B cell (primary cell): ENCODE measurements at regions of chr18 and their contacts with region 1.

Region 1: GRCh38 chr18:63422087-63422809 is at the start of gene VPS4B:
- DNase-seq: peak; percentile 100
- ATAC-seq: peak; percentile 96
- H3K4me3 ChIP-seq: peak within 1 kb of the TSS; percentile 73 to 99 (median 82)
- H3K4me3 Mint-ChIP-seq: peak within 1 kb of the TSS; percentile 99
- H3K27ac ChIP-seq: peak within 1 kb of the TSS; percentile 93 to 99
- H3K27ac Mint-ChIP-seq: peak within 1 kb of the TSS; percentile 96
- H3K4me1 ChIP-seq: peaks cover 18 to 21% of the 10 kb centered on the region in 2 donors
- H3K4me1 Mint-ChIP-seq: peaks cover 35% of the 10 kb centered on the region
- H3K27me3 ChIP-seq: no peaks in the 10 kb centered on the region
- H3K27me3 Mint-ChIP-seq: peaks cover 9% of the 10 kb centered on the region
- CTCF ChIP-seq: peak; percentile 0
- total RNA-seq, gene VPS4B: 91.5 and 93.9 TPM in 2 replicates

Region 2: DNA sequence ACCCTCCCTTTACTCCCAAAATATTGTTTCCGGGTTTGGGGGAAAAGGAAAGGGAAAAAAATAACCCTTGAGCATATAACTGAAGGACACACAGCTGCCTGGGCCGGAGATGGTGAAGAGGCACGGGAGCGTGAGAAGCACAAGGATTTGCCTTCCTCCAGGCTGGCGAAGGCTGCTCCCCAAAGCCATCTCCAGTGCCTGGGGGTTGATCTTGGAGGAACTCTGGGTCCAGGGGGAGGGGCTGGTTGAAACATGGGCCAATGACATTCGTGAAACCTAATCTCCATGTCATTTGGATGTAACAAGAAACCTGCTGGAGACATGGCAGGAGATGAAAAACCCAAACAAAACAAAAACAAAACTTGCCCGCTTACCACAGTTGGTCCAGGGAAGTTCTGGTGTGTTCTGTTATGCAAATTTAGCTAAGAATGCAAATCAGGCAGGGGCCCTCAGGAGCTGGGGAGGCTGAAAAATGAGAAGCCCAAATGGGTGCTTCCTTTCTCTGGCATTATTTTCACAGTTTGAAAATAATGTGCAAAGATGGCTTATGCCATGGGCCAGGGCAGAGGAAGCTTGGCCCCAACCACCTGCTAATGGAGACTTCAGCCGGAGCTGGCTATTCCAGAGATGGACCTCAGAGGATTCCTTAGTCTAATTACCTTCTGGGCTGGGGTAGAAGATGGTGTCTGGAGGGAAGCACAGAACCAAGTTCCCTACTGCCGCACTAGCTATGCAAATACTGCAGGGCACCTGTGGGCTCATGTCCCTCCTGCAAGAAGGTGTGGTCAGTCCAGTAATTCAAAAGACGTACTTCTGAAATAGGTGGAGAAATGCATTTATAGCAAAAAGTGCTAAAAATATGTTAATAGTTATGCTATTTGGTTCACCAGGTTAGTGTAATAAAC is 283.6 kb before region 1 on chr18:
- CTCF ChIA-PET with region 1: no interaction called
- POLR2A ChIA-PET with region 1: no interaction called
- intact Hi-C with region 1: loop called (anchors 1 kb)
- DNase-seq: peak; percentile 80
- ATAC-seq: peak; percentile 57
- H3K4me3 ChIP-seq: peak overlapping the region; percentile 27 to 67 (median 56)
- H3K4me3 Mint-ChIP-seq: peak overlapping the region; percentile 95
- H3K27ac ChIP-seq: peak overlapping the region; percentile 73 to 84
- H3K27ac Mint-ChIP-seq: peak overlapping the region; percentile 98
- H3K4me1 ChIP-seq: peaks cover 63 to 67% of the 10 kb centered on the region in 2 donors
- H3K4me1 Mint-ChIP-seq: peaks cover 84% of the 10 kb centered on the region
- H3K27me3 ChIP-seq: no peaks in the 10 kb centered on the region
- H3K27me3 Mint-ChIP-seq: no peaks in the 10 kb centered on the region
- CTCF ChIP-seq: no peak

Region 3: GRCh38 chr18:63367053-63367953 is 54.9 kb before region 1 on chr18 and contains the start of gene KDSR:
- CTCF ChIA-PET with region 1: interaction called, 3 read pairs
- POLR2A ChIA-PET with region 1: interaction called, 4 read pairs
- intact Hi-C with region 1: loop called (anchors 1 kb)
- DNase-seq: peak; percentile 89
- ATAC-seq: peak; percentile 93
- H3K4me3 ChIP-seq: peak within 1 kb of the TSS; percentile 83 to 94 (median 85)
- H3K4me3 Mint-ChIP-seq: peak within 1 kb of the TSS; percentile 90
- H3K27ac ChIP-seq: peak within 1 kb of the TSS; percentile 51 to 71
- H3K27ac Mint-ChIP-seq: peak within 1 kb of the TSS; percentile 89
- H3K4me1 ChIP-seq: peaks cover 11 to 13% of the 10 kb centered on the region in 2 donors
- H3K4me1 Mint-ChIP-seq: peaks cover 26% of the 10 kb centered on the region
- H3K27me3 ChIP-seq: no peaks in the 10 kb centered on the region
- H3K27me3 Mint-ChIP-seq: no peaks in the 10 kb centered on the region
- CTCF ChIP-seq: no peak
- total RNA-seq, gene KDSR: 21.1 and 26.4 TPM in 2 replicates

Region 4: GRCh38 chr18:63439334-63439733 is 17.1 kb after region 1 on chr18:
- CTCF ChIA-PET with region 1: interaction called, 24 read pairs
- POLR2A ChIA-PET with region 1: no interaction called
- intact Hi-C with region 1: loop called (anchors 1 kb)
- DNase-seq: peak; percentile 72
- ATAC-seq: peak; percentile 78
- H3K4me3 ChIP-seq: no peak overlapping the region
- H3K4me3 Mint-ChIP-seq: no peak overlapping the region
- H3K27ac ChIP-seq: no peak overlapping the region
- H3K27ac Mint-ChIP-seq: no peak overlapping the region
- H3K4me1 ChIP-seq: peaks cover 2 to 5% of the 10 kb centered on the region in 2 donors
- H3K4me1 Mint-ChIP-seq: peaks cover 5% of the 10 kb centered on the region
- H3K27me3 ChIP-seq: no peaks in the 10 kb centered on the region
- H3K27me3 Mint-ChIP-seq: peaks cover 16% of the 10 kb centered on the region
- CTCF ChIP-seq: peak; percentile 94

Region 5: GRCh38 chr18:63444567-63444966 is 22.3 kb after region 1 on chr18:
- CTCF ChIA-PET with region 1: interaction called, 24 read pairs
- POLR2A ChIA-PET with region 1: no interaction called
- intact Hi-C with region 1: loop called (anchors 1 kb)
- DNase-seq: peak; percentile 67
- ATAC-seq: peak; percentile 89
- H3K4me3 ChIP-seq: no peak overlapping the region
- H3K4me3 Mint-ChIP-seq: peak overlapping the region; percentile 68
- H3K27ac ChIP-seq: peak overlapping the region; percentile 9 to 32
- H3K27ac Mint-ChIP-seq: peak overlapping the region; percentile 75
- H3K4me1 ChIP-seq: peaks cover 11 to 14% of the 10 kb centered on the region in 2 donors
- H3K4me1 Mint-ChIP-seq: peaks cover 15% of the 10 kb centered on the region
- H3K27me3 ChIP-seq: no peaks in the 10 kb centered on the region
- H3K27me3 Mint-ChIP-seq: no peaks in the 10 kb centered on the region
- CTCF ChIP-seq: no peak

Region 6: GRCh38 chr18:63969960-63970802 is 547.9 kb after region 1 on chr18 and contains the start of gene SERPINB8:
- CTCF ChIA-PET with region 1: no interaction called
- POLR2A ChIA-PET with region 1: no interaction called
- intact Hi-C with region 1: loop called (anchors 1 kb)
- DNase-seq: peak; percentile 77
- ATAC-seq: peak; percentile 84
- H3K4me3 ChIP-seq: peak within 1 kb of the TSS; percentile 57 to 98 (median 81)
- H3K4me3 Mint-ChIP-seq: peak within 1 kb of the TSS; percentile 93
- H3K27ac ChIP-seq: peak within 1 kb of the TSS; percentile 91 to 95
- H3K27ac Mint-ChIP-seq: peak within 1 kb of the TSS; percentile 96
- H3K4me1 ChIP-seq: peaks cover 28 to 33% of the 10 kb centered on the region in 2 donors
- H3K4me1 Mint-ChIP-seq: peaks cover 51% of the 10 kb centered on the region
- H3K27me3 ChIP-seq: no peaks in the 10 kb centered on the region
- H3K27me3 Mint-ChIP-seq: no peaks in the 10 kb centered on the region
- CTCF ChIP-seq: no peak
- total RNA-seq, gene SERPINB8: 22.1 and 26.2 TPM in 2 replicates